Naive thymus-derived CD4-positive, alpha-beta T cell (primary cell): ENCODE measurements at regions of chr1 and their contacts with region 1.

Region 1: GRCh38 chr1:91555821-91556531 is 55.3 kb downstream of the CDC7 start:
- DNase-seq: peak in 8 of 9 donors; percentile 56 to 86 (median 76)
- ATAC-seq: peak; percentile 93
- H3K4me3 ChIP-seq: no peak overlapping the region
- H3K4me3 Mint-ChIP-seq: peak overlapping the region in 7 of 10 donors; percentile 12 to 63 (median 45)
- H3K27ac ChIP-seq: peak overlapping the region; percentile 29
- H3K27ac Mint-ChIP-seq: peak overlapping the region; percentile 50 to 97 (median 85)
- H3K4me1 ChIP-seq: peaks cover 35 to 94% of the 10 kb centered on the region in 2 donors
- H3K4me1 Mint-ChIP-seq: peaks cover 41 to 92% (median 57%) of the 10 kb centered on the region in 7 donors
- H3K27me3 ChIP-seq: no peaks in the 10 kb centered on the region
- H3K27me3 Mint-ChIP-seq: peaks cover 0 to 3% (median 0%) of the 10 kb centered on the region in 5 donors

Region 2: GRCh38 chr1:91054780-91055481 is 501.0 kb before region 1 on chr1:
- CTCF ChIA-PET with region 1: no interaction called
- POLR2A ChIA-PET with region 1: no interaction called
- intact Hi-C with region 1: no loop called
- DNase-seq: peak in 1 of 9 donors; percentile 0
- ATAC-seq: no peak
- H3K4me3 ChIP-seq: no peak overlapping the region
- H3K4me3 Mint-ChIP-seq: no peak overlapping the region
- H3K27ac ChIP-seq: no peak overlapping the region
- H3K27ac Mint-ChIP-seq: no peak overlapping the region
- H3K4me1 ChIP-seq: peaks cover 0 to 9% of the 10 kb centered on the region in 2 donors
- H3K4me1 Mint-ChIP-seq: no peaks in the 10 kb centered on the region
- H3K27me3 ChIP-seq: no peaks in the 10 kb centered on the region
- H3K27me3 Mint-ChIP-seq: peaks cover 0 to 8% (median under 1%) of the 10 kb centered on the region in 5 donors

Region 3: GRCh38 chr1:91591175-91591968 is 35.4 kb after region 1 on chr1:
- CTCF ChIA-PET with region 1: no interaction called
- POLR2A ChIA-PET with region 1: no interaction called
- intact Hi-C with region 1: loop called (anchors 1 to 2 kb)
- DNase-seq: peak in 3 of 9 donors; percentile 7 to 24 (median 9)
- ATAC-seq: peak; percentile 54
- H3K4me3 ChIP-seq: no peak overlapping the region
- H3K4me3 Mint-ChIP-seq: peak overlapping the region; percentile 63 to 79 (median 76)
- H3K27ac ChIP-seq: no peak overlapping the region
- H3K27ac Mint-ChIP-seq: peak overlapping the region in 8 of 9 donors; percentile 8 to 68 (median 44)
- H3K4me1 ChIP-seq: peaks cover 0 to 18% of the 10 kb centered on the region in 2 donors
- H3K4me1 Mint-ChIP-seq: peaks cover 15 to 39% (median 22%) of the 10 kb centered on the region in 7 donors
- H3K27me3 ChIP-seq: no peaks in the 10 kb centered on the region
- H3K27me3 Mint-ChIP-seq: peaks cover 0 to 2% (median 0%) of the 10 kb centered on the region in 5 donors

Region 4: DNA sequence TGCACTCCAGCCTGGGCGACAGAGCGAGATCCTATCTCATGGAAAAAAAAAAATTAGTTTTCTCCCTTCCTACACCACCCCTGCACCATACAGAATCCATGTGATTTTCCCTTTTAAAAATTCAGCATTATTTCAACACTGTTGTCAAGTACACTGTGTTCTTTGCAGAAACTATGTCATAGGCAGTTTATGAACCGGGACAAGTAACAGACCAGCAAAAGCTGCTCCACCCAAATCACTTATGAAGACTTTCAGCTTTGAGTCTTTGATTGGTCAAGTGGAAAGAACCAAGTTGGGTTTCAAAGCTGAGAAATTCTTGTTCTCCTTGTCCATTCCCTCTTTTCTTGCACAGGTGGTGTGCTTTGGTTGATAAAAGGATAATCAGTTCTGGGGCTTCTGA is 117.6 kb after region 1 on chr1:
- CTCF ChIA-PET with region 1: no interaction called
- POLR2A ChIA-PET with region 1: no interaction called
- intact Hi-C with region 1: loop called in 1 of 2 experiments (anchors 5 kb)
- DNase-seq: no peak
- ATAC-seq: no peak
- H3K4me3 ChIP-seq: no peak overlapping the region
- H3K4me3 Mint-ChIP-seq: no peak overlapping the region
- H3K27ac ChIP-seq: no peak overlapping the region
- H3K27ac Mint-ChIP-seq: no peak overlapping the region
- H3K4me1 ChIP-seq: no peaks in the 10 kb centered on the region
- H3K4me1 Mint-ChIP-seq: peaks cover 0 to 32% (median 9%) of the 10 kb centered on the region in 7 donors
- H3K27me3 ChIP-seq: no peaks in the 10 kb centered on the region
- H3K27me3 Mint-ChIP-seq: no peaks in the 10 kb centered on the region

Region 5: DNA sequence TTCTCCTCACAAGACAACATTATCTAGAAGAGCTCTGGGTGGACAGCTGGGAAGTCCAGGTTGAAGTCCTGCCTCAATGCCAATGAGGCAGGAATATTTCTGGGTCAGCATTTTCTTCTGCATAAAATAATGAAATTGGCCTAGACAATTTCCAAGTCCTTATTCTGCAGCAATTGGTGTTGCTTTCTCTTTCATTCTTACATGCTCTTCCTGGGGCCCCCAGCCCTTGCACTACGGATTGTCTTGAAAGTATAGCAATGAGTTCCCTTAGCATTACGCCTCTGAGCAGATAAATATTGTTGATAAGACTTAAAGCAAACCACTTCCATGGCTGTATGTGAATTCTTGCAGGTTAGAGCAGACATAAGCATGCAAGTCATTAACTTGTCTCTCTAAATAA is 141.4 kb after region 1 on chr1:
- CTCF ChIA-PET with region 1: no interaction called
- POLR2A ChIA-PET with region 1: no interaction called
- intact Hi-C with region 1: loop called in 1 of 2 experiments (anchors 5 kb)
- DNase-seq: peak in 8 of 9 donors; percentile 52 to 73 (median 60)
- ATAC-seq: peak; percentile 88
- H3K4me3 ChIP-seq: peak overlapping the region; percentile 45
- H3K4me3 Mint-ChIP-seq: peak overlapping the region; percentile 25 to 88 (median 57)
- H3K27ac ChIP-seq: peak overlapping the region; percentile 35
- H3K27ac Mint-ChIP-seq: peak overlapping the region; percentile 39 to 90 (median 83)
- H3K4me1 ChIP-seq: peaks cover 14 to 18% of the 10 kb centered on the region in 2 donors
- H3K4me1 Mint-ChIP-seq: peaks cover 19 to 43% (median 37%) of the 10 kb centered on the region in 7 donors
- H3K27me3 ChIP-seq: no peaks in the 10 kb centered on the region
- H3K27me3 Mint-ChIP-seq: no peaks in the 10 kb centered on the region

Region 6: DNA sequence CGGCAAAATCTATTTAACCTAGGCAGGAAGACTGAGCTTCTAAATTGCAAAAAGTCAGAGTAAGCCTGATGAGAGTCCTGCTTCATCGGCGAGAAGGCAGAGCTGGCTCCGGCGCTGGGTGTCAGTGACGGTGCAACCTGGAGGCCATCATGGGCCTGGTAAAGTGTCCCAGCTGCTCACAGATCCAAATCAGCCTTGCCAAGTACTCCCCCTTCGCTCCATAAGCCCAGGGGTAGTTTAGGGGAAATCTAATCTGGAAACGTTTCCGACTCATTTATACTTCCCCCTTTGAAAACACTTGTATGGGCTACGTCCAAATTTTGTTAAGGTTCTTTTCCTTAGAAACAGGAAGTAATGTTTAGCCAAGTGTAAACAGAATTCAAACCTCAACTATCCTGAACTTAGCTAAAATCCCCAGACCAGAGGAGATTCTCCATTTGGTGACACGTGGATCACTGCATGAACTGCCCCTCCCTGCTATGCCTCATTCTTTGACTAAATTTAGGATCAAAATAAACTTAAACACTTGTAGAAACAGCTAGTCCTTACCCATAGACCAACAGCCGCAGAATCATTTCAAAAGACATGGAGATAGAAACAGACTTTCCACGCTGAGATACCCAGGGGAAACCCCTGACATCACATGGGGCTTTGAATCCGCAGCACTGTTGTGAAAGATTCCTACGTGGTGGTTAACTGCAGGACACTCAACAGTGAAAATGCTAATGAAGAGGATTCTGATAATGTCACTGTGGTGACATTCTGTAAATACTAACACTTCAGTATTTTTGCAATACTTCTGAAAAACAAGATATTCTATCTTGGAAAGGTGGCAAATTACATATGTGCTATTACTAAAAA is 157.2 kb after region 1 on chr1:
- CTCF ChIA-PET with region 1: no interaction called
- POLR2A ChIA-PET with region 1: no interaction called
- intact Hi-C with region 1: loop called in 1 of 2 experiments (anchors 1 kb)
- DNase-seq: peak in 1 of 9 donors; percentile 60
- ATAC-seq: peak; percentile 86
- H3K4me3 ChIP-seq: no peak overlapping the region
- H3K4me3 Mint-ChIP-seq: peak overlapping the region in 3 of 10 donors; percentile 37 to 57 (median 48)
- H3K27ac ChIP-seq: no peak overlapping the region
- H3K27ac Mint-ChIP-seq: peak overlapping the region in 3 of 9 donors; percentile 24 to 71 (median 66)
- H3K4me1 ChIP-seq: peaks cover 0 to 16% of the 10 kb centered on the region in 2 donors
- H3K4me1 Mint-ChIP-seq: peaks cover 0 to 48% (median 11%) of the 10 kb centered on the region in 7 donors
- H3K27me3 ChIP-seq: no peaks in the 10 kb centered on the region
- H3K27me3 Mint-ChIP-seq: no peaks in the 10 kb centered on the region

Region 7: GRCh38 chr1:92411511-92411910 is 855.5 kb after region 1 on chr1:
- CTCF ChIA-PET with region 1: no interaction called
- POLR2A ChIA-PET with region 1: no interaction called
- intact Hi-C with region 1: no loop called
- DNase-seq: no peak
- ATAC-seq: no peak
- H3K4me3 ChIP-seq: no peak overlapping the region
- H3K4me3 Mint-ChIP-seq: peak overlapping the region in 9 of 10 donors; percentile 15 to 73 (median 55)
- H3K27ac ChIP-seq: no peak overlapping the region
- H3K27ac Mint-ChIP-seq: peak overlapping the region in 5 of 9 donors; percentile 28 to 84 (median 72)
- H3K4me1 ChIP-seq: peaks cover 23 to 27% of the 10 kb centered on the region in 2 donors
- H3K4me1 Mint-ChIP-seq: peaks cover 23 to 47% (median 39%) of the 10 kb centered on the region in 7 donors
- H3K27me3 ChIP-seq: no peaks in the 10 kb centered on the region
- H3K27me3 Mint-ChIP-seq: no peaks in the 10 kb centered on the region